Activated CD4-positive, alpha-beta memory T cell treated with anti-CD3 and anti-CD28 coated beads, Interleukin-2, amount 10 ng/mL, durations not matched to agents 7 days and 5 days (primary cell): ENCODE measurements at regions of chr19 and their contacts with region 1.

Region 1: GRCh38 chr19:3035542-3036118 is 6.5 kb upstream of the TLE2 start:
- DNase-seq: peak; percentile 96
- H3K4me3 Mint-ChIP-seq: peak overlapping the region; percentile 83
- H3K27ac Mint-ChIP-seq: peak overlapping the region; percentile 91
- H3K4me1 Mint-ChIP-seq: peaks cover 23% of the 10 kb centered on the region
- H3K27me3 Mint-ChIP-seq: peaks cover 25% of the 10 kb centered on the region

Region 2: DNA sequence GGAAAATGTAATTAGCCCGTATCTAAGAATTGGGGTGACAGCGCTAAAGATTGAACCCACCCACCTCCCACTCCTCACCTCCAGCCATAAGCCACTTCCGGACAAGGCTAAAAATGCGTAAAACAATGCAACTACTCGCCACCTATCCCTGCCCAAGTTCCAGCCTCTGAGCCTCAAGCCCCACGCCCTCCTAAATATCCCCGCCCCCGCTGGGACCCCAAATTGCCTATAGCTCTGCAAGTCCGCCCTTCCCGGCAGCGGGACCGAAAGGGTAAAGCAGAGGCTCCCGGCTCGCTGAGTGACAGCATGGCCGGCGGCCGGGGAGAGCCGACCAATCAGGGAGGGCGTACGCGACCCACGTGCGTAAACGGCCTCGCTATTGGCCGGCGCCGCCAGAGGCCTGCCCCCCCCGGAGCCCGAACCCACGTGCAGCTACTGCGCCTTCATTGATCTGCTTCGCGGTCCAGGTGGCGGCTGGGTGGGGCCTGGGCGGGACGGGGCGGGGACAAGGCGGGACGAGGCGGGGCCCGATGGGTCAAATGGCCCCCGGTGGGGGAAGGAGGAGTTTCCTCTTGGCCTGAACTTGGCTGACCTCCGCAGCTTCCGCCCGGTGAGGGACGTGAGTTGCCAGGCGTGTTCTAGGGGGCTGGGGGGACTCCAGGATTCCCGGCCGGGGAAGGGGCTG is 58.5 kb before region 1 on chr19 and contains the start of gene TLE6:
- CTCF ChIA-PET with region 1: interaction called, 5 read pairs
- POLR2A ChIA-PET with region 1: interaction called, 14 read pairs
- DNase-seq: peak; percentile 96
- H3K4me3 Mint-ChIP-seq: peak within 1 kb of the TSS; percentile 90
- H3K27ac Mint-ChIP-seq: peak within 1 kb of the TSS; percentile 74
- H3K4me1 Mint-ChIP-seq: peaks cover 21% of the 10 kb centered on the region
- H3K27me3 Mint-ChIP-seq: peaks cover 9% of the 10 kb centered on the region
- total RNA-seq, gene TLE6: 1.1 to 2.0 TPM

Region 3: GRCh38 chr19:3003046-3003445 is 32.6 kb before region 1 on chr19:
- CTCF ChIA-PET with region 1: no interaction called
- POLR2A ChIA-PET with region 1: no interaction called
- DNase-seq: no peak
- H3K4me3 Mint-ChIP-seq: no peak overlapping the region
- H3K27ac Mint-ChIP-seq: no peak overlapping the region
- H3K4me1 Mint-ChIP-seq: no peaks in the 10 kb centered on the region
- H3K27me3 Mint-ChIP-seq: no peaks in the 10 kb centered on the region

Region 4: GRCh38 chr19:3024870-3025550 is 10.6 kb before region 1 on chr19:
- CTCF ChIA-PET with region 1: interaction called, 5 read pairs
- POLR2A ChIA-PET with region 1: interaction called, 18 read pairs
- DNase-seq: no peak
- H3K4me3 Mint-ChIP-seq: no peak overlapping the region
- H3K27ac Mint-ChIP-seq: no peak overlapping the region
- H3K4me1 Mint-ChIP-seq: peaks cover 28% of the 10 kb centered on the region
- H3K27me3 Mint-ChIP-seq: peaks cover 26% of the 10 kb centered on the region

Region 5: GRCh38 chr19:3054972-3055740 is 19.5 kb after region 1 on chr19:
- CTCF ChIA-PET with region 1: interaction called, 23 read pairs
- POLR2A ChIA-PET with region 1: interaction called, 81 read pairs
- DNase-seq: no peak
- H3K4me3 Mint-ChIP-seq: no peak overlapping the region
- H3K27ac Mint-ChIP-seq: no peak overlapping the region
- H3K4me1 Mint-ChIP-seq: peaks cover 30% of the 10 kb centered on the region
- H3K27me3 Mint-ChIP-seq: no peaks in the 10 kb centered on the region

Region 6: DNA sequence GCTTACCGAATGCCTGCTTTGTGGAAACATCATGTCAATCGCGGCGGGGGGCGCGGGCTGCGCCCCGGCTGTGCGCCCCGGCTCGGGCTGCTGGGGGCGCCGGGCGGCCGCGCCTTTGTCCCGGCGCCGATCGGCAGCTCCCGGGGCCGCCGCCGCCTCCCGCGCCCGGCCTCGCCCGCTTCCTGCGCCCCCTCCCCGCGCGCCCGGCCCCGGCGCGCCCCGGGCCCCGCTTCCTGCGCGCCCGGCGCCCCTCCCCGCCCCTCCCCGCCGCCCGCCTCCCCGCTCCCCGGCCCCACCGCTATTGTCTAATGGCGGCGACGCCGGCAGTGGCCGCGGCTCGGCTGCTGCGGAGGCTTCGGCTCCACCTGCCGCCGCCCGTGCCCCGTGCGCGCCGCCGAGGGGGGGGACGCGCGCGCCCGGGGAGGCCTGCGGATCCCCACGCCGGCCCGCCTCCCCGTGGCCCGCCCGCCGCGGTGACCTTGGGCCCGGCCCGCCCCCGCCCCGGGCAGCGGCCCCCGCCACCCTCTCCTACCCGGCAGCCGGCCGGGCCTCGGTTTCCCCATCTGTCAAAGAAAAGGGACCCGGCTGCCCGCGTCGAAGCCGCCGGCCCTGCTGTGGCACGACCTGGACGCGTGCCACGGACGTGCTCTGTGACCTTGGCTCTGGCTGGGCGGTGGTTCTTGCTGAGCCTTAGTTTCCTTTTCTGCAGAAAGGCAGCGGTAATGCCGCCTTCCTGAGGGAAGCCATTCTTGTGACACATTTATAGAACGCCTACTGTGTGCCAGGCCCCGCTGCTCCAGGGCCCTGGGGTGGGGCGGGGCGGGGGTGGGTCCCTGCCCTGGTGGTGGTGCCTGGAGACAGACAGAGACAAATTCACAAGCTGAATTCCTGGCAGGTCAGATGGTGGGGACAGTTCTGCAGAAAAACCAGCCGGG is 26.8 kb after region 1 on chr19 and contains the start of gene TLE5:
- CTCF ChIA-PET with region 1: interaction called, 23 read pairs
- POLR2A ChIA-PET with region 1: interaction called, 81 read pairs
- DNase-seq: peak; percentile 73
- H3K4me3 Mint-ChIP-seq: peak within 1 kb of the TSS; percentile 91
- H3K27ac Mint-ChIP-seq: peak within 1 kb of the TSS; percentile 97
- H3K4me1 Mint-ChIP-seq: peaks cover 42% of the 10 kb centered on the region
- H3K27me3 Mint-ChIP-seq: no peaks in the 10 kb centered on the region
- total RNA-seq, gene TLE5: 712 to 724 TPM